PC-3 (cell line): ENCODE measurements at regions of chr11 and their contacts with region 1.

Region 1: DNA sequence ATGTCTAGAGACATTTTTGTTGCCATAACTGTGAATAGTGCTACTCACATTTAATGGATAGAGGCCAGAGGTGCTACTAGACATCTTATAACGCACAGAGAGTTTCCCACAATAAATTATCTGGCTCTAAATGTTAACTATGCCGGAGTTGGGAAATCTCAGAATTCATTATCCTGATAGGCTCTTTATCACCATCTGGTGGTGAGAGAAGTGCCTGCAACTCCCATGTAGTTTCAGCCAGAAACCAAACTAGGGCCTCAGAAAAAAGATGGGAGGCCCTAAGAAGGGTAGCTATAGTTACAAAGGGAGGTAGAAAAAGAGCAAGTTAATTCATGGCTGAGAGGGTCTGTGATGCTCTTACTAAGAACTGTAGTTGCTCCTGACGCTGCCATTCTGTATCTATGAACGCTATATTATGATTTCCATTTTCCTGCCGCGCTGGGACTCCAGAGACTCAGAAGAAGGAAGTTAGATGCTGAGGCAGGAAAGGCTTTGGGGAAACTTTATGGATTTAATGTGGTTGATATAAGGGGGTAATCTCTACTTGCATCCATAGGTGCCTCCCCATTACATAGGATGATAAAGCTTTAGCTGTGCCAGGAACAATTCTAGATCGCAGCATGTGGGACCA is 22.9 kb upstream of the MRPL17 start:
- DNase-seq: peak; percentile 64
- ATAC-seq: peak; percentile 18; the same call in 1 of the 2 replicates
- H3K4me3 ChIP-seq: no peak overlapping the region
- H3K27ac ChIP-seq: no peak overlapping the region
- H3K4me1 ChIP-seq: peaks cover 8% of the 10 kb centered on the region; the same call in 1 of the 2 replicates
- H3K27me3 ChIP-seq: no peaks in the 10 kb centered on the region
- CTCF ChIP-seq: peak; percentile 78

Region 2: GRCh38 chr11:5809122-5809519 is 896.9 kb before region 1 on chr11:
- CTCF ChIA-PET with region 1: no interaction called
- POLR2A ChIA-PET with region 1: no interaction called
- intact Hi-C with region 1: no loop called
- DNase-seq: no peak
- ATAC-seq: peak; percentile 49
- H3K4me3 ChIP-seq: peak overlapping the region; percentile 62
- H3K27ac ChIP-seq: no peak overlapping the region
- H3K4me1 ChIP-seq: no peaks in the 10 kb centered on the region
- H3K27me3 ChIP-seq: peaks cover 34% of the 10 kb centered on the region
- CTCF ChIP-seq: no peak

Region 3: DNA sequence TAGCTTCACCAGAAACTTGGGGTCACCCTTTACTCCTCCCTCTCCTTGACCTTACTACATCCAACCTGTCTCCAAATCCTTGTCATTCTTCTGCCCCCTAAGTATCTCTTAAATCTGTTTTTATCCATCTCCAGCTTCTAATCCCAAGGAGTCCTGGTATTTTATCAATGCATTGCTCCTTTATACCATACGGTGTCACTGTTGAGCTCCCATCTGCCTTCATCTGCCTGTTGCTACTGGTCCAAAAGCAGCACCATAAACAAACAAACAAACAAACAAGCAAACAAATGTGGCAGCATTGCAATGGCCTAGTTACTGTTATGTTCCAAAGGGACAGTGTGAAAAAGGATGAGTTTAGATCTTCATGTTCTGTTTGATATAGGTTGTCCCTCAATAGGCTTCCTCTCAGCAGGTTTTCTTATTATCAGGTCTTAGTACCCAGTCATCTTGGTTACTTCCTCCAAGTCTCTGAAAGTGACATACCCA is 174.7 kb before region 1 on chr11:
- CTCF ChIA-PET with region 1: no interaction called
- POLR2A ChIA-PET with region 1: no interaction called
- intact Hi-C with region 1: loop called (anchors 1 kb)
- DNase-seq: peak; percentile 60
- ATAC-seq: peak; percentile 71
- H3K4me3 ChIP-seq: no peak overlapping the region
- H3K27ac ChIP-seq: no peak overlapping the region
- H3K4me1 ChIP-seq: no peaks in the 10 kb centered on the region
- H3K27me3 ChIP-seq: no peaks in the 10 kb centered on the region
- CTCF ChIP-seq: peak; percentile 82

Region 4: DNA sequence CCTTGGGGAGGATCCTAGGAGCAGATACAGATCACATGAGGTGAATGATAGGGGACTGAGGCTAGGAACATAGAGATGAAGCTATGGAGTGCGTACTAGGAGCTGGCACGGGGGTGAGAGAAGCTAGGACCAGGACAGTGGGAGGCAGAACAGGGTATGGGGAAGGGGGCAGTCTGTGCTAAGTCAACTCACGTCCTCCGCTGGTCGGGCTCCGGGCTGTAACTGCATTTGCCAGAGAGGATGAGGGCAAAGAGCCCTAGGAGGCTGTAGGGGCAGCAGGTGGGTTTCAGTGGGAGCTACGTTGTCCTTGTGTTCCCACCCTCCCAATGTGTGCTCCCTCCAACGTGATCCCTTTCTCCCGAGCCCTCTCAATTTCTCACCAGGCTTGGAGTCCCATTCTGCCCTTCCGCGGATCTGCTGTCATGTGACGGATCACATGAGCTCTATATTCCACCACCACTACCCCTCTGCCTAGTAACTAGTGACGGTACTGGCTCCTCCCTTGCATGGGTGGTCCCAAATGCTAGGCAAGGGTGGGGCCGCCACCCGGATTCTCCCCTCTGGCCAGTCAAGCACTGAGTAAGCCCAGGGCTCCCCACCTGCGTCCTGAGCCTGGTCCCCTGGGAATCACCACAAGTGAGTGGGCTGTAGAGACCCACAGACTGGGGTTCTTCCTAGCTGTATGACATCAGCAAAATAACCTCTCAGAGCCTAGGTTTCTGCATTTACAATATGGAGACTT is 86.8 kb before region 1 on chr11 and contains the start of gene TPP1:
- CTCF ChIA-PET with region 1: no interaction called
- POLR2A ChIA-PET with region 1: no interaction called
- intact Hi-C with region 1: loop called (anchors 2 kb)
- DNase-seq: peak; percentile 93
- ATAC-seq: peak; percentile 90
- H3K4me3 ChIP-seq: peak within 1 kb of the TSS; percentile 79
- H3K27ac ChIP-seq: 0 out of 2 replicates have a peak within 1 kb of the TSS, but pooled peaks have one; percentile 1
- H3K4me1 ChIP-seq: peaks cover 14% of the 10 kb centered on the region
- H3K27me3 ChIP-seq: no peaks in the 10 kb centered on the region
- CTCF ChIP-seq: no peak
- total RNA-seq, gene TPP1: 21.6 and 48.3 TPM in 2 replicates

Region 5: GRCh38 chr11:6682936-6683861 is 22.8 kb before region 1 on chr11 and contains the start of gene MRPL17:
- CTCF ChIA-PET with region 1: interaction called, 4 read pairs
- POLR2A ChIA-PET with region 1: no interaction called
- intact Hi-C with region 1: loop called (anchors 2 kb)
- DNase-seq: peak; percentile 98
- ATAC-seq: peak; percentile 94
- H3K4me3 ChIP-seq: peak within 1 kb of the TSS; percentile 81
- H3K27ac ChIP-seq: peak within 1 kb of the TSS; percentile 41
- H3K4me1 ChIP-seq: peaks cover 5% of the 10 kb centered on the region; the same call in 1 of the 2 replicates
- H3K27me3 ChIP-seq: no peaks in the 10 kb centered on the region
- CTCF ChIP-seq: peak; percentile 84
- total RNA-seq, gene MRPL17: 72.5 and 78.1 TPM in 2 replicates

Region 6: DNA sequence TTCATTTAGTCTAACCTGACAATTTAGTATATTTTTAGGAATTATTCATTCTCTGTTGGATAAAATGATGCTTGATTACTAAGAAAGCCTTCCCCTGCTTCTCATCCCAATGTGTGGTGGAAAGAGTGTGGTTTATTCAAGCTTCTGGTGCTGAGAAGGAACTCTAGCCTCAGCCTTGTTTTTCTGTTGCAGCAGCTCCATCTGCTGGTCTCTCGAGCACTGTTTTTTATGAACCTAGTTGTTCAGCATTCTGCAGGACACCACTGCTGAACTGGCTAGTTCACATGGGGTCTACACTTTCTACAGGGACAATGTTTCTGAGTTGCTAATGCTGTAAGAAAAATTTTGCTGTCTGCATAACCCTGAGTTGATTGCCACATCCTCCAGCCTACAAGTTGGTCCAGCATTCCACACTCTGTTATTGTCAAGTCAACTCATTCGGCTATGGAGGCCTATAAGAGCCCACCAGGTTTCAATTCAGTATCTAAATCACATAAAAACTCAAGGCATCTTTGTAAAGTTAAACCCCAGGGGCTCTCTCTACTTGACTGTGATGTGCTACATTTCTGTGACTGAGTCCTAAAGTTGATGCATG is 51.5 kb after region 1 on chr11:
- CTCF ChIA-PET with region 1: interaction called, 4 read pairs
- POLR2A ChIA-PET with region 1: no interaction called
- intact Hi-C with region 1: loop called (anchors 1 kb)
- DNase-seq: peak; percentile 58
- ATAC-seq: peak; percentile 89
- H3K4me3 ChIP-seq: no peak overlapping the region
- H3K27ac ChIP-seq: no peak overlapping the region
- H3K4me1 ChIP-seq: no peaks in the 10 kb centered on the region
- H3K27me3 ChIP-seq: no peaks in the 10 kb centered on the region
- CTCF ChIP-seq: peak; percentile 62